ENCODE measurements at regions of chr12 and their contacts with region 1.

Region 1: DNA sequence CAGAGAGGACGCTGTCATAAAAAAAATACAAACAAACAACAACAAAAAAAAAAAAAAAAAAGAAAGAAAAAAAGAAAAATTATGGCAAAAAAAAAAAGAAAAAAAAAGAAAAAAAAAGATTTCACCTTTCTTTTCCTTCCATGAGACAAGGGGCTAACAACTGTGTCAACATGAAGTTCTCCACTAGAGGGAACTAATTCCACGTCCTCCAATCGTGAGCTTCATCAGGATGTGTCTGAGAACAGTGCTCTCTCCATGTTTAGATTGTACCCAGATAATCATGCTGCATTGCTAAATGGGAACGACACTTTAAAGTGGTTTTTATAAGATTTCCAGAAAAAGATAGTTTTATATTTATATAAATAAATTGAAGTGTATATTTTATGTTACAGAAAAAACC is 96.2 kb upstream of the PTPRB start:
- DNase-seq: peak; percentile 56 to 69
- H3K4me3 ChIP-seq: no peak overlapping the region
- H3K4me3 Mint-ChIP-seq: no peak overlapping the region
- H3K27ac Mint-ChIP-seq: no peak overlapping the region
- H3K4me1 ChIP-seq: no peaks in the 10 kb centered on the region
- H3K4me1 Mint-ChIP-seq: no peaks in the 10 kb centered on the region
- H3K27me3 ChIP-seq: no peaks in the 10 kb centered on the region
- H3K27me3 Mint-ChIP-seq: no peaks in the 10 kb centered on the region
- CTCF ChIP-seq: peak; percentile 61 to 80

Region 2: DNA sequence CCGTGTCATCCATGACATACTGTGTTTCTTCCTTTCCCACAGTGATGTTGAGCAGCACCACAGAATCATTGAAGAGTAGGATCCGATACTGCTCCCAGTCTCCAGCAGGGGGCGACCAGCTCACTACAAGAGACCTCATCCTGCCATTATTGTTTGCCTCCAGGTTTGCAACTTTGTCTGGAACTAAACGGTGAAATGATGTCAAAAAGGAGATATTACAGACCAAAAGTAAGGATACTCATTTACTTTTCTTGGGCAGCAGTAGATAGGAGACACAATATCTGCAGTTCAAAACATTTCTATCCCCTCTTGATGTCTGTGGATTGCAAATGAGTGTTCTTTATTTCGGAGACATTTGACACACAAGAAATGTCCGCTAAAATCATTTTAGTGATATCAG is 143.3 kb before region 1 on chr12:
- CTCF ChIA-PET with region 1: no interaction called
- POLR2A ChIA-PET with region 1: no interaction called
- intact Hi-C with region 1: loop called (anchors 1 kb)
- DNase-seq: peak; percentile 65 to 76
- H3K4me3 ChIP-seq: no peak overlapping the region
- H3K4me3 Mint-ChIP-seq: no peak overlapping the region
- H3K27ac Mint-ChIP-seq: no peak overlapping the region
- H3K4me1 ChIP-seq: no peaks in the 10 kb centered on the region
- H3K4me1 Mint-ChIP-seq: no peaks in the 10 kb centered on the region
- H3K27me3 ChIP-seq: no peaks in the 10 kb centered on the region
- H3K27me3 Mint-ChIP-seq: peaks cover 3% of the 10 kb centered on the region
- CTCF ChIP-seq: peak; percentile 88 to 93

Region 3: DNA sequence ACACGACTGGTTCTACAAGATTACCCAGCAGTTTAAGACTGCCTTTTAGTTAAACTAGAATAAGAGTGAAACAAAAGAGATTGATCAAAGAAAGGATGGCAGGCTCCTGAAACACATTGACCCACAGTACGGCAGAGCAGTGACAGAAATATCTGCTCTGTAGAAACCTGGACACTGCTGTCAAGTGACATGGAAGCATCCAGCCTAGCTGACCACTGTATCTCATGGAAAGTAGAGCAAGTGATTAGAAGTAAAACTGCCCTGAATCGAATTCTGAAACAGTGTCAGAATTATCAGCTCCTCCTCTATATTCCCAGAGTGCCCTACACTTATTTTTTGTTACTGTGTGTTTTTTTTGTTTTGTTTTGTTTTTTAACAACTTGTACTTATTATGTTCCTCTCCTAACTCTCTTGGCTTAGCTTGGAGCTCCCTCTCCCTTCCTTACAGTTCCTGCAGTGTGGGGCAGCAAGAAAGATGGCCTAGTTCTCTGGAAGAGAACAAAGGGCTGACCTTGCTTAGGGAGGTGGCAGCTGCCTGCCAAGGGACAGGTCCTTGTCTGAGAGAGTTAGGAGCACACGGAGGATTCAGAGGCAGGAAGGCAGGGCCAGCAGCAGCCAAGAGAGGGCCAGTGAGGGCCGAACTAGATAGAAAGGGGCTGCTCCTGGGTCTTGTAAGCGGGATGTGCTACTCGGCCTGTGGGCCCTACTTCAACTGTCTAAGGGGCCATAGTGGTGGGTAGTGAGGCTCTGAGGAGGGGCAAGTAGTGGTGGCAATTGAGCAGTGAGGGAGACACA is 90.0 kb after region 1 on chr12:
- CTCF ChIA-PET with region 1: interaction called, 8 read pairs
- POLR2A ChIA-PET with region 1: no interaction called
- intact Hi-C with region 1: loop called (anchors 1 kb)
- DNase-seq: no peak
- H3K4me3 ChIP-seq: no peak overlapping the region
- H3K4me3 Mint-ChIP-seq: no peak overlapping the region
- H3K27ac Mint-ChIP-seq: peak overlapping the region; percentile 43
- H3K4me1 ChIP-seq: peaks cover 18% of the 10 kb centered on the region
- H3K4me1 Mint-ChIP-seq: peaks cover 34% of the 10 kb centered on the region
- H3K27me3 ChIP-seq: no peaks in the 10 kb centered on the region
- H3K27me3 Mint-ChIP-seq: no peaks in the 10 kb centered on the region
- CTCF ChIP-seq: no peak

Region 4: DNA sequence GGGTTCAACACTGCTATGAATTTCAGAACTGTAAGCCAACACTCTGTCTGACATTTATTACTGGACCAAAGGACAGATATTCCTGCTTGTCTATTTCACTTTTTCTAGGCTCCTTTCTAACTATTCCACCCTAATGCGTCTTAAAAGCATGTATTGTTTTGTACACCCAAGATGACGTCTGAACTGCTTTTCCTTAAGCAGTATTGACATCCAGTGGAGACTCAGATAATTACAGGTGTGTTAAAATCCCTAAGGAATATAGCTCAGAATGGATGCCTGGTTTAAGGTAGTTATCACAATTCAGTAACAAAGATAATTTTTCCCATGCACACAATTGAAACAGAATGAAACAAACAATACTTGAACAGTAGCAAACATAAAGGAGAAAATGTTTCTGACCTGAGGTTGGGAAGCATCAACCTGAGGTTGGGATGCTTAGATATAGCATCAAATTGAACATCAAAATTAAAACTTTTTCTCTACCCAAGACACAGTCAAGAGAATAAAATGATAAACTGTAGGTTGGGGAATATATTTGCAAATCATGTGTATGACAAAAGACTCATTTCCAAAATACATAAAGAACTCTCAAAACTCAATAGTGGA is 280.9 kb after region 1 on chr12:
- CTCF ChIA-PET with region 1: interaction called, 19 read pairs
- POLR2A ChIA-PET with region 1: no interaction called
- intact Hi-C with region 1: loop called (anchors 1 kb)
- DNase-seq: peak in 1 of 2 experiments; percentile 40
- H3K4me3 ChIP-seq: no peak overlapping the region
- H3K4me3 Mint-ChIP-seq: no peak overlapping the region
- H3K27ac Mint-ChIP-seq: no peak overlapping the region
- H3K4me1 ChIP-seq: peaks cover 12% of the 10 kb centered on the region
- H3K4me1 Mint-ChIP-seq: peaks cover 13% of the 10 kb centered on the region
- H3K27me3 ChIP-seq: no peaks in the 10 kb centered on the region
- H3K27me3 Mint-ChIP-seq: no peaks in the 10 kb centered on the region
- CTCF ChIP-seq: peak; percentile 48 to 61